Cardiac septum (tissue), 1 donor: ENCODE measurements at regions of chr20 and their contacts with region 1.

Region 1: DNA sequence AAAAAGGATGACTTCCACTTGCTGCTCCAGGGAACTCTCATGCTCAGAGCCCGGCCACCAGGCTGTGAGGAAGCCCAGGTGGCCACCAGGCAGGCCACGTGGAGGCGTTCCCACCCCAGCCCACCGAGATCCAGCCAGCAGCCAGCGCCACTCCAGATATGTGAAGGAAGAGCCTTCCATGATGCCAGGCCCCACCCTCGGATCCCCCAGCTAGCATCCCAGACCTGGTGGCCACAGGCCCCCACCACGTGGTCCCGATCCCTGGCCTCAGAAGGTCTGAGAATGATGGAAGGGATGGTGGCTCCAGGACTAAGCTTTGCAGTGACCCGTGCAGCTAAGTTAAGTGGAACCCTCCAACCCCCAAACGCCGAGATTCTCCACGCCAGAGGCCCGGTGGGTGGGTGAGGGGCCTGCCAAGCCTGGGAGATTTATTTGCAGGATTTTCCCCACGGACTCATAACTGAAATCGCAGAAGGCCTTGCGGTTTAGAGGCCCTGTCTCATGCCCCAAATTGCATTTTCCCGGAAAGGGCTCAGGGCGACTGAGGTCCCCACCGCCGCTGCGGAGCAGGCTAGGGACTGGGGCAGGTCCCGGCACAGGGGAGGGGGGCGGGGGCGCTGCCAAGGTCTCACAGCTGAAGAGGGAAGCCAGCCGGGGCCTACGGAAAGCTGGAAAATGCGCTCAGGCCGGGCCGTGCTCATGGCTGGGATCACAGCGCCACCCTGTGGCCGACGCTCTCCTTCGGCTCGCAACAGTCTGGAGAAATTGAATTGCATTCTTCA is 31.1 kb upstream of the CST7 start:
- DNase-seq: peak; percentile 87

Region 2: DNA sequence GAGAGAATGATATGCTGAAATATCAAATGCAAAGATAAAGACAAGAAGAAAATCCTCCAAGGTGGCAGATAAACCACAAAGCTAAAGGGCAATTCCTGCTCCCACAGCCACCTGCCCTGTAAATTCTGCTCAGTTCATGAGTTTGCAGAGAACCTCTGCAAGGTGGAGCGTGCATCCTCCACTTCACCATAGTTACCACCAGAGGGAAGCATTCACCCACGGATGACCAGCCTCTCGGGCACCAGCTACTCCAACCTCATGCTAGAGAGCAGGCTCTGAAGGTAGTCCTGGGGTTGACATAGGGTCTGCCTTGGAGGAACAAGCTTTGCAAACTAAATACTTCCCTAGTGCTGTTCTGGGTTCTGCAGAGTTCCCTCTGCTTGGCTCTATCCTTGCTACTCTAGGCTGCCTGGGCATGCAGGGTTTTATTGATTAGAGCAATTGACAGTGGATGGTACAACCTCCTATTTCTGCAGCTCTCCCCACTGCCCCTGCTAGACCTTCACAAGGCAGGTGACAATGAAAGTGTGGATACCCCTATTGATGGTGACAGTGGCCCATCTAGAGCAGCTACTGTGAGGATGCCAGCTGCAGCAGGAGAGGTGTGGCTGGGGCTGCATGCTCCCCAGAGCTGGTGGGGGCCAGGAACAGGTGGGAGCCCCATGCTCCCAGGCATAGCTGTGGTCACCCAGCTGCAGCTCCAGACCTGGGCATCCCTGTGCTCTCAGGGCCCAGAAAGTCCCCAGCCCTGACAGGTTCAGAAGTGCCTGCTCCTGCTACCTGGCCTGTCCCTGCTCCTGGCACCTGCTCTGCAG is 980.5 kb before region 1 on chr20:
- intact Hi-C with region 1: loop called (anchors 10 kb)
- DNase-seq: peak; percentile 82

Region 3: GRCh38 chr20:24160563-24161375 is 757.2 kb before region 1 on chr20:
- intact Hi-C with region 1: loop called (anchors 5 kb)
- DNase-seq: no peak